OCI-LY7 (cell line): ENCODE measurements at regions of chr1 and their contacts with region 1.

Region 1: DNA sequence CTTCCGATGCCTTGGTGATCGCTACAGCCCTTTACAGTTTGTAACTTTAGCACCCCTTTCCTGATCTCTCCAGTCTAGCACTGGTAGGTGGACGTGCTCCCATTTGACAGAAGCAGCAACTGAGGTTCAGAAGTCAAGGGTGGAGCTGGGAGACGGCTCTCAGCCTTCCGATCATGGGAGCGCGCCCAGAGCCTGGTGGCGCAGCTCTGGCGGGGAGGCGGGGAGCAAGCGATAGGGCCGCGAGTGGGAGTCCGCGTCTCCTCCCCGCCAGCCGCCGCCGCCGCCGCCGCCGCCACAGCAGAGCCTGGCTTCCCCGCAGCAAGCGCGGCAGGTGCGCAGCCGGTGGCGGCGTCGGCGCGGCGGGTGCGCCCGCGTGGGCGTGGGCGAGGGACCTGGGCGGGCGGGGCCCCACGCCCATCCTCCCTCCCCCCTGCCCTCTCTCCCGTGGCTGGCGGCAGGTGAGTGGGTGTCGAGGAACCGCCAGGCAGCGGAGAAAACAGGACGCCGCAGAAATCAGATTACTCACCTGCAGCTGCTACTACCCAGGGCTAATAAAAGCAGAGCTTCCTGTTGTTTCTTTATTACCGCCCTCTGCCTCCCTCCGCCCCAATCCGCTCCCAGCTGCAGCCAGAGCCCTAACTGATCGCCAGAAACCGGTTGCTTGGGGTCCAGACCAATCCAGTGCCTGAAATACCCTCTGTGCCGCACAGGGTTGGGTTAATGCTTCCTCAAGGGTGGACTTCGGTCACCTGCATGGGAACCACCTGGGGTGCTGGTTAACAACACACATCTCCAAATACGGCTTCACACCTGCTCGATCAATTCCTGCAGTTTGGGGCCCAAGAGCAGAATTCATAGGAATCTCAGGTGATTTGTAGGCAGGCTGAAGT is 60.2 kb upstream of the ID3 start:
- DNase-seq: peak; percentile 97
- H3K4me3 ChIP-seq: peak overlapping the region; percentile 69
- H3K27ac ChIP-seq: peak overlapping the region; percentile 99
- H3K4me1 ChIP-seq: peaks cover 95% of the 10 kb centered on the region
- CTCF ChIP-seq: no peak

Region 2: DNA sequence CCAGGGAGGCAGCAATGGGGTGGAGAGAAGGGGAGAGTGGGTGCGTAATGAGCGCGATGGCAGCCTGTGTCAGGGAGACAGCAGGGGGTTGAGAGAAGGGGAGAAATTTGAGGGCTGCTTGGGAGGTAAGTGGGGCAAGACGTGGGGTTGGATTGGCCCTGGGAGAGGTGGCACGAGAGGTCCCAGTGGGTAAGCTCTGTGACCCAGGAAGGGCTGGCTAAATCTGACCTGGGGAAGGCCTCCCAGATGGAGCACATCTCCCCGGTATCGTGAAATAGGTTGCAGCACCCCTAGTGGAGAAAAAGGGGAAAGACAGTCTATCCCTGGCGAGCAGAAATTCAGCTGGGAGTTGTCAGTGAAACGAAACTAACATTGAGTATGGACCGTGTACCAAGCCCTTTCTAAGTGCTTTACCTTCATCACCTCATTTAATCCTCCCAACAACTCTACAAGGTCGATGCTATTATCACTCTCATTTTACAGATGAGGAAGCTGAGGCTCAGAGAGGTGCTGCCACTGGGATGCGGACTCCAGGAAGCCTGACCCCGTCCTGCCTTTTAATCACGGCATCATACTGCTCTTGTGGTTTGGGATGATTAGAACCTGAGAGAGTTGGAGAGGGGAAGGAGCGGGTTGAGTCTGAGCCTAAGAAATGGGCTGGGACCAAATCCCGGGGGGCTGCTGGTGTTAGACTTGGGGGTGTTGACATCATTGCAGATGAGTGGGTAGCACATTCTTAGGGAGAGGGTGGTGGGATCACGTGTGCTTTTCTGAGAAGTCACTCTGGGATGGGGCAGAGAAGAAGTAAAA is 15.5 kb after region 1 on chr1:
- CTCF ChIA-PET with region 1: interaction called, 7 read pairs
- POLR2A ChIA-PET with region 1: interaction called, 37 read pairs
- intact Hi-C with region 1: no loop called
- DNase-seq: peak; percentile 82
- H3K4me3 ChIP-seq: peak overlapping the region; percentile 52
- H3K27ac ChIP-seq: peak overlapping the region; percentile 85
- H3K4me1 ChIP-seq: peaks cover 92% of the 10 kb centered on the region
- CTCF ChIP-seq: peak; percentile 93

Region 3: GRCh38 chr1:23657659-23658275 is 38.2 kb after region 1 on chr1:
- CTCF ChIA-PET with region 1: no interaction called
- POLR2A ChIA-PET with region 1: no interaction called
- intact Hi-C with region 1: no loop called
- DNase-seq: peak; percentile 80
- H3K4me3 ChIP-seq: no peak overlapping the region
- H3K27ac ChIP-seq: no peak overlapping the region
- H3K4me1 ChIP-seq: peaks cover 42% of the 10 kb centered on the region
- CTCF ChIP-seq: peak; percentile 98

Region 4: GRCh38 chr1:23699280-23700179 is 80.0 kb after region 1 on chr1:
- CTCF ChIA-PET with region 1: no interaction called
- POLR2A ChIA-PET with region 1: no interaction called
- intact Hi-C with region 1: no loop called
- DNase-seq: no peak
- H3K4me3 ChIP-seq: no peak overlapping the region
- H3K27ac ChIP-seq: no peak overlapping the region
- H3K4me1 ChIP-seq: peaks cover 20% of the 10 kb centered on the region
- CTCF ChIP-seq: no peak

Region 5: GRCh38 chr1:23923592-23924499 is 304.3 kb after region 1 on chr1:
- CTCF ChIA-PET with region 1: no interaction called
- POLR2A ChIA-PET with region 1: no interaction called
- intact Hi-C with region 1: no loop called
- DNase-seq: no peak
- H3K4me3 ChIP-seq: no peak overlapping the region
- H3K27ac ChIP-seq: no peak overlapping the region
- H3K4me1 ChIP-seq: peaks cover 39% of the 10 kb centered on the region
- CTCF ChIP-seq: no peak